Activated CD4-positive, alpha-beta memory T cell treated with anti-CD3 and anti-CD28 coated beads, Interleukin-2, amount 10 ng/mL, durations not matched to agents 7 days and 5 days (primary cell): ENCODE measurements at regions of chr3 and their contacts with region 1.

Region 1: GRCh38 chr3:151146071-151146730 is 56.8 kb downstream of the GPR171 start:
- DNase-seq: peak; percentile 65
- H3K4me3 Mint-ChIP-seq: no peak overlapping the region
- H3K27ac Mint-ChIP-seq: no peak overlapping the region
- H3K4me1 Mint-ChIP-seq: no peaks in the 10 kb centered on the region
- H3K27me3 Mint-ChIP-seq: peaks cover 16% of the 10 kb centered on the region

Region 2: DNA sequence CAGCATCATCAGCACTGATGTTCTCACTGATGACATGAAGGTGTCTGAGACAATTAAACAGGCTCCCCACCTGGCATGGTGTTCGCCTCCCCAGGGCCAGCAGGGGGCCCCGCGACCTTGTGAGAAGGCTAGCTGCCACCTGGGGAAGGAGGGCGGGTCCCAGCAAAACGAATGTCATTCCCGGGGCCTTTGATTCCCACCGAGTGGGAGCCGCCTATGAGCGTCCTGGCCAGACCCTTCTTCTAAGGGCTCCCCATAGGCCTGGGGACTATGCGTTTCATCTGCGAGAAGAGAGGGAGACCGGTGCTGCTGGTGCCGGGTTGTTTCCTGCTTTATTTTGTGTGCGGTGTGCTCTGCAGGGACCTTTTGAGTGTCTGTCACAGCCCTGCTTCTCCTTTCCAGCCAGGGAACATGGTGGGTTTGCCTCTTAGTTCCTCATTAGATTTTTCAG is 220.4 kb before region 1 on chr3:
- CTCF ChIA-PET with region 1: interaction called, 11 read pairs
- POLR2A ChIA-PET with region 1: no interaction called
- DNase-seq: peak; percentile 57
- H3K4me3 Mint-ChIP-seq: no peak overlapping the region
- H3K27ac Mint-ChIP-seq: no peak overlapping the region
- H3K4me1 Mint-ChIP-seq: peaks cover 5% of the 10 kb centered on the region
- H3K27me3 Mint-ChIP-seq: peaks cover 28% of the 10 kb centered on the region

Region 3: DNA sequence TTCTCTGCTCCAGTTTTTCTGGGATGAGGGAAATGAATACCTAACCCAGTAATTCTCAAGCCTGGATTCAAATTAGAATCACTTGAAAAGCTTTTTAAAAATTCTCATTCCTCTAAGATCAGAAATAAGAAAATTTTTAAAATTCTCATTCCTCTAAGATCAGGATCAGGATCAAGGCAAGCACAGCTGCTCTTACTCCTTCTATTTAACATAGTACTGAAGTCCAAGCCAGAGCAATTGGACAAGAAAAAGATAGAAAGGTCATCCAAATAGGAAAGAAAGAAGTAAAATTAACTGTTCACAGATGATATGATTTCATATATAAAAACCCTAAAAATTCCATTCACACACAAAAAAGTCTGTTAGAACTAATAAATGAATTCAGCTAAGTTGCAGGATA is 149.5 kb before region 1 on chr3:
- CTCF ChIA-PET with region 1: no interaction called
- POLR2A ChIA-PET with region 1: no interaction called
- DNase-seq: no peak
- H3K4me3 Mint-ChIP-seq: no peak overlapping the region
- H3K27ac Mint-ChIP-seq: no peak overlapping the region
- H3K4me1 Mint-ChIP-seq: no peaks in the 10 kb centered on the region
- H3K27me3 Mint-ChIP-seq: peaks cover 34% of the 10 kb centered on the region

Region 4: GRCh38 chr3:151024339-151024738 is 121.9 kb before region 1 on chr3:
- CTCF ChIA-PET with region 1: no interaction called
- POLR2A ChIA-PET with region 1: no interaction called
- DNase-seq: no peak
- H3K4me3 Mint-ChIP-seq: no peak overlapping the region
- H3K27ac Mint-ChIP-seq: no peak overlapping the region
- H3K4me1 Mint-ChIP-seq: no peaks in the 10 kb centered on the region
- H3K27me3 Mint-ChIP-seq: peaks cover 8% of the 10 kb centered on the region

Region 5: DNA sequence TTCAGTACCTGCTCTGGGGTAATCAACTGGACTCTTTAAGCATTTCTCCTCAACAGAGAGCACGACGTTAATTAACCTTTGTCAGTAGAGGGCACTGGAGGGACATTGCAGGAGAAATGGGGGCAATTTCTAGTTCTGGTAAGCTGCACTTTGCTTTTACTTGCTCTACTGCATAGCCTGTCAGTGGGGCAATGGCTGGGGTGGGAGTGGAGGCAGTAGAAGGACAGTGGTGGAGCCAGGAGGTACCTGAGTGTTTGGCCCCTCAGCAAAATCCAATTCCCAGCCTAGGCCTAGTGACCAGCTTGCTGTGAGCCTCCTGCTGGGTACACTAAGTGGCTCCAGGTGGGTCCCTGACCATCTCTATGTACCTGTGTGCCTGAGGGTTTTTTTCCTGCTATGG is 79.0 kb before region 1 on chr3:
- CTCF ChIA-PET with region 1: interaction called, 32 read pairs
- POLR2A ChIA-PET with region 1: no interaction called
- DNase-seq: no peak
- H3K4me3 Mint-ChIP-seq: no peak overlapping the region
- H3K27ac Mint-ChIP-seq: no peak overlapping the region
- H3K4me1 Mint-ChIP-seq: no peaks in the 10 kb centered on the region
- H3K27me3 Mint-ChIP-seq: peaks cover 14% of the 10 kb centered on the region

Region 6: GRCh38 chr3:151086484-151087456 is 59.4 kb before region 1 on chr3:
- CTCF ChIA-PET with region 1: interaction called, 24 read pairs
- POLR2A ChIA-PET with region 1: interaction called, 3 read pairs
- DNase-seq: peak; percentile 77
- H3K4me3 Mint-ChIP-seq: peak overlapping the region; percentile 77
- H3K27ac Mint-ChIP-seq: no peak overlapping the region
- H3K4me1 Mint-ChIP-seq: peaks cover 10% of the 10 kb centered on the region
- H3K27me3 Mint-ChIP-seq: peaks cover 48% of the 10 kb centered on the region

Region 7: DNA sequence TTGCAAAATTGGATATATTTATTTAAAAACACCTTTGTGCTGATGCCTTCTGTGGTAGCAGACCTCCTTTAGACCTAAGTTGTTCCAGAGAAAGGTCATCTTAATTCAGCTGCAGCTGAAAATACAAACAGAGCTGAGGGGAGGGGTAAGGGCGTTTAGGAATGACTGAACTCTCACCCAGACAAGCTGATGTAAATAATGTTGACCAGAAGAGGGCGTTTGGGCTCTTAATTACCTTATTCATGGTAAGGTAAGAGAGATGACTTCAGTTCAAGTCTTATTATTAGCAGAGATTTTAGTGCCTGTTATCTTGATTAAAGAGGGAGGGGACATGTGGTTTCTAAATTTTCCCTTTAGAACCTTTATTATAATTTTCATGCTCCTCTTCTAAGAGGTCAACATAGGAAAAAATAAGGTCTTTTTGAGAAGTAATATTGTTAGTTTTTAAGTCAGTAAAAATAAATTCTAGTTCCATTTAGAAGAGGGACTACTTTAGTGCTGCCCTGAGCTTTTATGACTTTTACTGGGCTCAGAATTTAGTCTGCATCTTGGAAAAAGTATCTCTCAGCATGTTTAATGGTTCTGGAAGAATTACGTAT is 10.5 kb after region 1 on chr3:
- CTCF ChIA-PET with region 1: interaction called, 11 read pairs
- POLR2A ChIA-PET with region 1: no interaction called
- DNase-seq: peak; percentile 21
- H3K4me3 Mint-ChIP-seq: no peak overlapping the region
- H3K27ac Mint-ChIP-seq: no peak overlapping the region
- H3K4me1 Mint-ChIP-seq: no peaks in the 10 kb centered on the region
- H3K27me3 Mint-ChIP-seq: peaks cover under 1% of the 10 kb centered on the region

Region 8: GRCh38 chr3:151248772-151249337 is 102.7 kb after region 1 on chr3:
- CTCF ChIA-PET with region 1: no interaction called
- POLR2A ChIA-PET with region 1: no interaction called
- DNase-seq: no peak
- H3K4me3 Mint-ChIP-seq: no peak overlapping the region
- H3K27ac Mint-ChIP-seq: no peak overlapping the region
- H3K4me1 Mint-ChIP-seq: peaks cover 2% of the 10 kb centered on the region
- H3K27me3 Mint-ChIP-seq: peaks cover 14% of the 10 kb centered on the region